MCF 10A (cell line): ENCODE measurements at regions of chr18 and their contacts with region 1.

Region 1: DNA sequence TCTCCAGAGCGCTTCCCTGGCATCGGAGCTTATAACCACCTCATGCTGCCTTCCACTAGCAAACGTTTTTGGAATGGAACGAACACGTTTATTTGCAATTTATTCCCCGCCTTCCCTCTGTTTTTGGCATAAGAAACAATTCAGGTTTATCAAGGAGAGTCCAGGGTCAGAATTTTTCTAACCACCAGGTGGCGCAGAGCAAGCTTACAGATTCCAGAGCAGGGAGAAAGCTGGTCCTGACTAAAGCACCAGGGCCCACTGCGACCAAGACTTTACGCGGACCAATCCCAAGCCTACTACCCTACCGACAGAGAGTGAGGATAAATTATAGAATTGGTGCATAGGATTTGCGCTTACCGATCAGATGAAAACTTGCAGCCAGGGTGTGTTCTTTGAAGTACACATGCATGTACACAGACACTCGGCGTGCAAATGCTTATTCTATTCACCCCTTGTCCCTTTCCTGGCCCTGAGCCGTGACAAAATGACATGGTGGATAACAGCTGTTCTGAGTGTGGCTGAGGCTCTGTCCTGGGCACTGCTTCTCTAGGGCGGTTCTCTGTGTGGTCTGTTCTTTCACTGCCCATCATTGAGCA is 34.7 kb downstream of the NAPG start:
- DNase-seq: peak; percentile 73
- H3K4me3 Mint-ChIP-seq: no peak overlapping the region
- H3K27ac Mint-ChIP-seq: peak overlapping the region; percentile 77
- H3K4me1 Mint-ChIP-seq: peaks cover 44% of the 10 kb centered on the region
- H3K27me3 Mint-ChIP-seq: no peaks in the 10 kb centered on the region
- CTCF ChIP-seq: peak; percentile 49

Region 2: GRCh38 chr18:10536280-10536679 is 24.3 kb before region 1 on chr18:
- CTCF ChIA-PET with region 1: interaction called, 14 read pairs
- POLR2A ChIA-PET with region 1: interaction called, 4 read pairs
- intact Hi-C with region 1: no loop called
- DNase-seq: no peak
- H3K4me3 Mint-ChIP-seq: no peak overlapping the region
- H3K27ac Mint-ChIP-seq: no peak overlapping the region
- H3K4me1 Mint-ChIP-seq: no peaks in the 10 kb centered on the region
- H3K27me3 Mint-ChIP-seq: no peaks in the 10 kb centered on the region
- CTCF ChIP-seq: no peak

Region 3: DNA sequence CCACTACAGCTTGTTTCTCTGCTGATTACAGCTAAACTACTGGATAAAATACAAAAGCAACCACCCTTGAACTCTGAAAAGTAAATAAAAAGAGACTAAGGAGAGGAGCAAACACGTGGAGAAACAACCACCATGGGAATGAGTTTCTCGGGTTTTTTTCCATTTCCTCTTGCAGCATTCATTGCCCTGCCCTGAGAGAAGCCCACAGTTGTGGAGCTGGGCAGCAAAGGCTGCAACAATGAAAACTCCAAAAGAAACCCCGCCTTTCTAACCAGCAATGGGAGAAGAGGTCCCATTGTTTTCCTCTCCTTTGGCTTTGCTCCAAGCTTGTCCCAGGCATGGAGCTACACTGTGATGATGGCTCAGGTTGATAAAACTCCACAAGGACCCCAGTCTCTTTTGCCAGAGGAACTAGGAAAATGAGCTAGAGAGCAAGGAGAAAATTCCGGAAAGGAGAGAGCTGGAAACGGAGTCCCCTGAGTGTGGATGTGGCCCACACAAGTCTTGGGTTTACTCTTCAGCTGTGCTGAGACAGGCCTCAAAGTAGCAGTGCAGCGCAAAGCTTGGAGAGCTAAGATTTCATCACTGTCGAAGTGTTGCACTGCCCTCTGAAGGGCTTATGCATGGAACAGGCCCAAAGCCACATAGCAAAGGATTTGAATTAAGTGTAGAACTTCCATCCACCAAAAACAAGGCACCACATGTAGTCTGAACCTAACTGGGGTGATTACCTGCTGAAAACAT is 13.8 kb before region 1 on chr18:
- CTCF ChIA-PET with region 1: interaction called, 31 read pairs
- POLR2A ChIA-PET with region 1: interaction called, 3 read pairs
- intact Hi-C with region 1: no loop called
- DNase-seq: no peak
- H3K4me3 Mint-ChIP-seq: no peak overlapping the region
- H3K27ac Mint-ChIP-seq: no peak overlapping the region
- H3K4me1 Mint-ChIP-seq: no peaks in the 10 kb centered on the region
- H3K27me3 Mint-ChIP-seq: no peaks in the 10 kb centered on the region
- CTCF ChIP-seq: no peak

Region 4: GRCh38 chr18:10660179-10660884 is 99.8 kb after region 1 on chr18:
- CTCF ChIA-PET with region 1: interaction called, 18 read pairs
- POLR2A ChIA-PET with region 1: interaction called, 43 read pairs
- intact Hi-C with region 1: loop called (anchors 2 kb)
- DNase-seq: peak; percentile 27
- H3K4me3 Mint-ChIP-seq: peak overlapping the region; percentile 61
- H3K27ac Mint-ChIP-seq: peak overlapping the region; percentile 86
- H3K4me1 Mint-ChIP-seq: peaks cover 33% of the 10 kb centered on the region
- H3K27me3 Mint-ChIP-seq: no peaks in the 10 kb centered on the region
- CTCF ChIP-seq: no peak

Region 5: DNA sequence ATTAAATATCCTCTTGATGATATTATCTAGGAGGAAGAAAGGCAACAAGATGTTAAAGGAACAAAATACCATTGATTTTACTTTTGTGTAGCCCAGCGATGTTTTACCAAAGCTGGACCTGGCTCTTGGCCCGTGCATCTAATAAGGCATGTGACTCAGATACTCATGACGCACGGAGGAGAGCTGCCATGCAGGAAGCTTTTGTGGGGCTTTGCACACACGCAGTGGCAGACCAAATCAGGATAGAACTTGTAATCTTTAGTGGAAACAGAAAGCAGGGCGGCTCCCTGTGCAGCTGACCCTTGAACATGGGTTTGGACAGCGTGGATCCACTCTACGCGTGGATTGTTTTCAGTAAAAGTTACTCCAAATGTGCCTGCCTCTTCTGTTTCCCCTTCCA is 155.2 kb after region 1 on chr18:
- CTCF ChIA-PET with region 1: interaction called, 3 read pairs
- POLR2A ChIA-PET with region 1: interaction called, 3 read pairs
- intact Hi-C with region 1: loop called (anchors 2 kb)
- DNase-seq: peak; percentile 77
- H3K4me3 Mint-ChIP-seq: no peak overlapping the region
- H3K27ac Mint-ChIP-seq: peak overlapping the region; percentile 73
- H3K4me1 Mint-ChIP-seq: peaks cover 12% of the 10 kb centered on the region
- H3K27me3 Mint-ChIP-seq: no peaks in the 10 kb centered on the region
- CTCF ChIP-seq: no peak

Region 6: GRCh38 chr18:10787293-10787901 is 226.8 kb after region 1 on chr18:
- CTCF ChIA-PET with region 1: interaction called, 16 read pairs
- POLR2A ChIA-PET with region 1: no interaction called
- intact Hi-C with region 1: loop called (anchors 1 kb)
- DNase-seq: peak; percentile 86
- H3K4me3 Mint-ChIP-seq: no peak overlapping the region
- H3K27ac Mint-ChIP-seq: no peak overlapping the region
- H3K4me1 Mint-ChIP-seq: no peaks in the 10 kb centered on the region
- H3K27me3 Mint-ChIP-seq: peaks cover 19% of the 10 kb centered on the region
- CTCF ChIP-seq: peak; percentile 82

Region 7: DNA sequence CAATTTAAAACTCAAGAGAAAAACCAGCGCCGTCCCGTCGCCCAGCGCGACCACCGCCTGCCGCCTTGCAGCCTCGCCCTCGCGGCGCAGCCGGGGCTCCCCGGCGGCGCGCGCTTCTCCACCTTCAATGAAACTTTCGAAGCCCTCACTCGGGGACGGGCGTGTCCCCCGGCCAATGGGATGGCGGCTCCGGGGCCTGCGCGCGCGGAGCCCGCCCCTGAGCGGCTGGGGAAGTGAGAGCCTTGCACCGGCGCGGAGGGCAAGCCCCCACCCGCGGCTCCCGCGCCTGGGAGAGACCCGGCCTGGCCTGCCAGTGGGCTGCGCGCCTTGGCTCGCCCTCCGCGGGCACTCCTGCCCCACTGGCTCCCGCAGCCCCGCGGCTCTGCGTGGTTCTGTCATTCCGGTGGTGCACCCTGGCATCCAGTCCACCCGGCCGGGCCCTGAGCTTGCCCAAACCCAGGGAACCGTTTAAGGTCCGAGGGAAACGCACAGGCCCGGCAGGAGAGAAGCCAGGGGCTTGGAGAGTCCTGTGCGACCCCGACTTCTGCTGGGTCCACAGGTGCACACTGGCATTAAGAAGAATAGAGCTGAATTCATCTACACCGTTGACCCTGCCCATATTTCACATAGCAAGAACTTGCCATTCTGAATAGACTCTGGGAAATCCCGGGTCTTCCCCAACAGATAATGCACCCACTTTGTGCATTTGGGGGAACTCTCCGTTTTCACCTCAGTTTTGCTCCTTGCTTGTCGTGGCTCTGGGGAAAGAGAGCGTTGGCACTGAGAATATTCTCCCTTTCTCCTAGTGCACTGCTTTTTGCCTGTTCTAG is 589.1 kb after region 1 on chr18 and contains the start of gene PIEZO2:
- CTCF ChIA-PET with region 1: interaction called, 44 read pairs
- POLR2A ChIA-PET with region 1: no interaction called
- intact Hi-C with region 1: loop called (anchors 1 kb)
- DNase-seq: no peak
- H3K4me3 Mint-ChIP-seq: no peak within 1 kb of the TSS
- H3K27ac Mint-ChIP-seq: no peak within 1 kb of the TSS
- H3K4me1 Mint-ChIP-seq: no peaks in the 10 kb centered on the region
- H3K27me3 Mint-ChIP-seq: peaks cover 54% of the 10 kb centered on the region
- CTCF ChIP-seq: no peak
- total RNA-seq, gene PIEZO2: 0.49 and 0.93 TPM in 2 replicates

Region 8: GRCh38 chr18:11752116-11752911 is 1191.8 kb after region 1 on chr18:
- CTCF ChIA-PET with region 1: no interaction called
- POLR2A ChIA-PET with region 1: no interaction called
- intact Hi-C with region 1: no loop called
- DNase-seq: no peak
- H3K4me3 Mint-ChIP-seq: peak overlapping the region; percentile 63
- H3K27ac Mint-ChIP-seq: no peak overlapping the region
- H3K4me1 Mint-ChIP-seq: no peaks in the 10 kb centered on the region
- H3K27me3 Mint-ChIP-seq: peaks cover 40% of the 10 kb centered on the region
- CTCF ChIP-seq: no peak